PC-9 (cell line): ENCODE measurements at regions of chr12 and their contacts with region 1.

Region 1: GRCh38 chr12:75722714-75723200 is 211.3 kb upstream of the KRR1 start:
- DNase-seq: peak in 1 of 2 experiments; percentile 24
- H3K4me3 ChIP-seq: no peak overlapping the region
- H3K27ac ChIP-seq: no peak overlapping the region
- H3K4me1 ChIP-seq: peaks cover 13% of the 10 kb centered on the region
- H3K27me3 ChIP-seq: no peaks in the 10 kb centered on the region
- CTCF ChIP-seq: no peak

Region 2: DNA sequence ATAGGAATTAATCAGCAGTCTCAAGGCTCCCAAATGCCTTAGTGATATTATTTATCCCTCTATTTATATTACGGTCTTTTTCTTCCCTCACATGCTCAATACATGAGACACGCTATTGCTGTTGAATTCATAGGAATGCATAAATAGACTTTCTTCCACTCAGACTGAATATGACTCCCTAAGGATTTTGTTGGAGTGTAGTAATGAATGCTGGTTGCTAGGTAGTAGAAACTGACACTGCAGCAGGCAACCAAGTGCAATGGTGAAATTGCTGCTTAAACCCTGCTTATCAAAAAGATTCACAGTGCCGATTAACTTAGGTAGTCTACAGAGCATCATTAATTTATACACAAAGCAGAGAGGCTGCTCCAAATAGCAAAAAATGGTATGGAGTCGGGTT is 681.3 kb before region 1 on chr12:
- CTCF ChIA-PET with region 1: no interaction called
- POLR2A ChIA-PET with region 1: no interaction called
- intact Hi-C with region 1: no loop called
- DNase-seq: no peak
- H3K4me3 ChIP-seq: no peak overlapping the region
- H3K27ac ChIP-seq: no peak overlapping the region
- H3K4me1 ChIP-seq: no peaks in the 10 kb centered on the region
- H3K27me3 ChIP-seq: no peaks in the 10 kb centered on the region
- CTCF ChIP-seq: no peak

Region 3: DNA sequence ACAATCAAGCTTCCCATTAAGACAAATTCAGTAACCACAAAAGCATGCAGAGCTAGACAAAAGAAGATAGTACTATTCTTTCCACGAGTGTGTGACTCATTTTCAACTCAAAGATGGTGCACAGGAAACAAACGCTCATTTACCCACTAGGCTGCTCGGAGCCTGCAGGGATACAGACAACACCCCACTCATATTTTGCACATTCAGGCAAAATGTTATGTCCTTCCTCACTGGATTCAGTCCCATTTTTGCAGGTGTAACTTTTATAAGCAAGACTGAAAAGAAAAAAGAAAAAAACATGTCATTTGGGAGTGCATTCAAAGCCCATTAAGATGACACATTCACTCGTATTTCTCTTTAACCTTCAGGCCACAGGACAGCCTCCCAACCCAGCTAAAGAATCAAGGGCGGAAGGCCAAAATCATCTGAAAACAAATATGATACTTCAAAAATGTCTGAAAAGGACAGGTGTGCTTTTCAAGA is 63.8 kb before region 1 on chr12:
- CTCF ChIA-PET with region 1: no interaction called
- POLR2A ChIA-PET with region 1: interaction called, 4 read pairs
- intact Hi-C with region 1: loop called (anchors 5 kb)
- DNase-seq: peak in 1 of 2 experiments; percentile 31
- H3K4me3 ChIP-seq: no peak overlapping the region
- H3K27ac ChIP-seq: no peak overlapping the region
- H3K4me1 ChIP-seq: peaks cover 28% of the 10 kb centered on the region
- H3K27me3 ChIP-seq: no peaks in the 10 kb centered on the region
- CTCF ChIP-seq: no peak

Region 4: GRCh38 chr12:75766263-75767160 is 43.8 kb after region 1 on chr12:
- CTCF ChIA-PET with region 1: no interaction called
- POLR2A ChIA-PET with region 1: no interaction called
- intact Hi-C with region 1: loop called (anchors 5 kb)
- DNase-seq: peak; percentile 40 to 93
- H3K4me3 ChIP-seq: no peak overlapping the region
- H3K27ac ChIP-seq: peak overlapping the region; percentile 72
- H3K4me1 ChIP-seq: peaks cover 36% of the 10 kb centered on the region
- H3K27me3 ChIP-seq: no peaks in the 10 kb centered on the region
- CTCF ChIP-seq: no peak

Region 5: DNA sequence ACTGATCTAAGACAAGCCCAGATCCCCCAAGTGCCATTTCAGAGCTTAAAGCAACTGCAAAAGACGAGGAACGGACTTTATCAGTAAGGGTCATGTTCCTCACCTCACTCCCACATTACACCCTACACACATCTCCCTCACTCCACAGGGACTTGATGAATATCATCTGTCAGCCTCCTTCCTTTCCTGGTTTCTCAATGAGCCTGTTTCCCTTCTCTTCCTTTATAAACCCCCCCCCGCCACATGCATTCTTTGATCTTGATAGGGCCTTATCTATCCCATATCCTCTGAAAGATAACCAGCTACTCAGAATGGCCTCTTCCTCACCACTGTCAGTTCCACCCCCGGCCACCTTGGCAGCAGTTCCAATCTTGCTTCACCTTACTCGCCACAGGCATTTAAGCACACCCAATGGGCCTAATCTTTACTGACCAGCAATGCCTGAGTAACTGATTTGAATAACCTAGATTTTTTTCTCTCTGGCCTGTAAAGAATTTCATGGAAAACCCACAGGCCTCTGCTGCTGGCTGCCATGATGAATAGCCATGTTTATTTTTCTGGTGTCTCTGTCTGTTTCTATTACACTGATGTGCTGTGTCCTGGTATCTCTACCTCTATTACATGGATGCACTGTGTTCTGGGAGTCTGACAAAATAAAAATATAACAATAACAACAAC is 170.1 kb after region 1 on chr12:
- CTCF ChIA-PET with region 1: no interaction called
- POLR2A ChIA-PET with region 1: no interaction called
- intact Hi-C with region 1: loop called (anchors 10 kb)
- DNase-seq: peak; percentile 51 to 64
- H3K4me3 ChIP-seq: no peak overlapping the region
- H3K27ac ChIP-seq: no peak overlapping the region
- H3K4me1 ChIP-seq: peaks cover 39% of the 10 kb centered on the region
- H3K27me3 ChIP-seq: no peaks in the 10 kb centered on the region
- CTCF ChIP-seq: no peak